PC-9 (cell line): ENCODE measurements at regions of chr17 and their contacts with region 1.

Region 1: DNA sequence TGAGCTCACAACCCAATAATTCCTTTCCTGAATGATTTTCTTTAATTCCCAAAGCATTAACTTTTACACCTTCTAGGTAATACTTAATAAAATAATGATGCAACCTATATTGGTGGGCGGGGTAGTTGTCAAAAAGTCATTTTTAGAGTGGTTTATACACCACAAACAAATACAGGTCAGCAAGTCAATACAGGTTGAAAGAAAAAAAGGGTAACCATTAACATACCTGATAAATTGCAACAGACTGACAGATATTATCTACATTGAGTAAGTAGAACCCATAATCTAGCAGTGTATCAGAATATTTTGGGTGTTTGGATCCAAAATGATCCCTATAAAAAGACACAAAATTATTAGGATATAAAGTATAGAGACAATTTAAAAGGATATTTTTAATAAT is 39.3 kb downstream of the CHCT1 start:
- DNase-seq: no peak
- H3K4me3 ChIP-seq: no peak overlapping the region
- H3K27ac ChIP-seq: no peak overlapping the region
- H3K4me1 ChIP-seq: no peaks in the 10 kb centered on the region
- H3K27me3 ChIP-seq: no peaks in the 10 kb centered on the region
- CTCF ChIP-seq: no peak

Region 2: GRCh38 chr17:60293580-60294335 is 167.8 kb before region 1 on chr17:
- CTCF ChIA-PET with region 1: no interaction called
- POLR2A ChIA-PET with region 1: no interaction called
- intact Hi-C with region 1: no loop called
- DNase-seq: no peak
- H3K4me3 ChIP-seq: no peak overlapping the region
- H3K27ac ChIP-seq: no peak overlapping the region
- H3K4me1 ChIP-seq: no peaks in the 10 kb centered on the region
- H3K27me3 ChIP-seq: no peaks in the 10 kb centered on the region
- CTCF ChIP-seq: no peak

Region 3: GRCh38 chr17:60599620-60600489 is 138.3 kb after region 1 on chr17 and contains the start of gene PPM1D:
- CTCF ChIA-PET with region 1: no interaction called
- POLR2A ChIA-PET with region 1: no interaction called
- intact Hi-C with region 1: no loop called
- DNase-seq: peak; percentile 93 to 98
- H3K4me3 ChIP-seq: peak within 1 kb of the TSS; percentile 87
- H3K27ac ChIP-seq: peak within 1 kb of the TSS; percentile 64
- H3K4me1 ChIP-seq: peaks cover 26% of the 10 kb centered on the region
- H3K27me3 ChIP-seq: no peaks in the 10 kb centered on the region
- CTCF ChIP-seq: no peak
- total RNA-seq, gene PPM1D: 10.4 and 12.1 TPM in 2 replicates

Region 4: DNA sequence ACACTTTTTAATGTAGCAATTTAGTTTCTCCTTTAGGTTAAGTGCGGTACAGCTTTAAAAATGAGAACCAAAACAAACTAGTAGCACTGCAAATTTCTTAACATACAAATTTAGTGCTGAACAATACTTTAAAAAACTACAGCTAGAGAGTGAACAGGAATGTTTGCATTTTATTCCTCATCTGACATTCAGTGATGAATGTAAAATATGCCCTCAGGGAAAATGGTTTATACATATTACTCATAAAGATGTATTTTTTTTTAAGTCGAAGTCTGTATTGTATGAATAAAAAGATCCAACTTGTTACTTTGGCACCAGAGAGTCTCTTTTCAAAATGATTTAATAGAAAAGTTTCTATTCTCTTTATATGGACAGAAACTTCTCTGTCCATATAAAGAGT is 1304.9 kb after region 1 on chr17:
- CTCF ChIA-PET with region 1: no interaction called
- POLR2A ChIA-PET with region 1: interaction called, 15 read pairs
- intact Hi-C with region 1: no loop called
- DNase-seq: peak in 1 of 2 experiments; percentile 61
- H3K4me3 ChIP-seq: no peak overlapping the region
- H3K27ac ChIP-seq: no peak overlapping the region
- H3K4me1 ChIP-seq: peaks cover 10% of the 10 kb centered on the region
- H3K27me3 ChIP-seq: no peaks in the 10 kb centered on the region
- CTCF ChIP-seq: no peak